ENCODE measurements at regions of chr1 and their contacts with region 1.

Region 1: DNA sequence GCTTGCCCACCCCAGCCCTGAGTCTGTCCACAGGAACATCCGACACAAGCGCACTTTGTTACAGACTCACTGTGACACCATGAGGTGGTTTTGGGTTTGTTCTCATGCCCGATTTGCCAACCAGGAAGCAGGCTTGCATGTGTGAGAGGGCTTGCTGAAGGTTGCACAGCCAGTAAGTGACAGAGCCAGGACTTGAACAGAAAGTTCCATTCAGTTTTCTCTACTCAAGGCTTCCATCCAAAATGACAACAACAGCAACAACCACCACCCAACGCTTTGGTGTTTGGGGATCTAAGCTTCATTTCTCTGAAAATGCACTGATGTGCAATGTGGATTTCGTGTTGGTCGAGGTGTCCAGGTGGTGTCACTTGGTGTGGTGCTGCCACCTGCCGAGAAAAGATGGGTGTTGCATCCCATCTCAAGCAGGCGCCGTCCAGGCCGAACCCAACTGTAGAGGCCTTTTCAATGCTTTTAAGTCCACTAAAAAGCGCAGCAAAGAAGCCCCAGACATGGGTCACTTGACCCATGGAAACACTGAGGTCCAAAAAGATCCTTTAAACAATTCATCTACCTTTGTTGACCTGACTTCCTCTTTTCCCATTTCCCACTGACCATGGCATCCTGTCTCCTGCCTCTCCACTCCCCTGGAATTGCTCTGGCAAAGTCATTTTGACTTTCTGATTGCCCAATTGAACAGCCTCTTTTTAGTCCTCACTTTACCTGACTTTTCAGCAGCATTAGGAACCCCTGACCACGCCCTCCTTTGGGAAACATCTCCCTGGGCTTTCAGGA is 12.2 kb downstream of the CITED4 start:
- DNase-seq: peak; percentile 78
- ATAC-seq: peak; percentile 92
- H3K4me3 ChIP-seq: no peak overlapping the region
- H3K27ac ChIP-seq: no peak overlapping the region
- H3K4me1 ChIP-seq: no peaks in the 10 kb centered on the region
- H3K27me3 ChIP-seq: no peaks in the 10 kb centered on the region
- CTCF ChIP-seq: peak; percentile 89

Region 2: GRCh38 chr1:40612345-40612831 is 237.6 kb before region 1 on chr1:
- intact Hi-C with region 1: loop called (anchors 10 kb)
- DNase-seq: no peak
- ATAC-seq: peak; percentile 97
- H3K4me3 ChIP-seq: no peak overlapping the region
- H3K27ac ChIP-seq: no peak overlapping the region
- H3K4me1 ChIP-seq: no peaks in the 10 kb centered on the region
- H3K27me3 ChIP-seq: no peaks in the 10 kb centered on the region
- CTCF ChIP-seq: peak; percentile 87

Region 3: GRCh38 chr1:40951943-40952743 is 102.1 kb after region 1 on chr1:
- intact Hi-C with region 1: loop called (anchors 5 kb)
- DNase-seq: peak; percentile 87
- ATAC-seq: peak; percentile 94
- H3K4me3 ChIP-seq: no peak overlapping the region
- H3K27ac ChIP-seq: no peak overlapping the region
- H3K4me1 ChIP-seq: peaks cover 11% of the 10 kb centered on the region
- H3K27me3 ChIP-seq: no peaks in the 10 kb centered on the region
- CTCF ChIP-seq: peak; percentile 93

Measured in upper lobe of right lung (tissue), 1 donor.